ENCODE measurements at regions of chr3 and their contacts with region 1.

Region 1: GRCh38 chr3:122458992-122459391 is 43.1 kb upstream of the WDR5B start:
- DNase-seq: no peak
- H3K4me3 Mint-ChIP-seq: no peak overlapping the region
- H3K27ac Mint-ChIP-seq: no peak overlapping the region
- H3K4me1 Mint-ChIP-seq: no peaks in the 10 kb centered on the region
- H3K27me3 Mint-ChIP-seq: no peaks in the 10 kb centered on the region

Region 2: DNA sequence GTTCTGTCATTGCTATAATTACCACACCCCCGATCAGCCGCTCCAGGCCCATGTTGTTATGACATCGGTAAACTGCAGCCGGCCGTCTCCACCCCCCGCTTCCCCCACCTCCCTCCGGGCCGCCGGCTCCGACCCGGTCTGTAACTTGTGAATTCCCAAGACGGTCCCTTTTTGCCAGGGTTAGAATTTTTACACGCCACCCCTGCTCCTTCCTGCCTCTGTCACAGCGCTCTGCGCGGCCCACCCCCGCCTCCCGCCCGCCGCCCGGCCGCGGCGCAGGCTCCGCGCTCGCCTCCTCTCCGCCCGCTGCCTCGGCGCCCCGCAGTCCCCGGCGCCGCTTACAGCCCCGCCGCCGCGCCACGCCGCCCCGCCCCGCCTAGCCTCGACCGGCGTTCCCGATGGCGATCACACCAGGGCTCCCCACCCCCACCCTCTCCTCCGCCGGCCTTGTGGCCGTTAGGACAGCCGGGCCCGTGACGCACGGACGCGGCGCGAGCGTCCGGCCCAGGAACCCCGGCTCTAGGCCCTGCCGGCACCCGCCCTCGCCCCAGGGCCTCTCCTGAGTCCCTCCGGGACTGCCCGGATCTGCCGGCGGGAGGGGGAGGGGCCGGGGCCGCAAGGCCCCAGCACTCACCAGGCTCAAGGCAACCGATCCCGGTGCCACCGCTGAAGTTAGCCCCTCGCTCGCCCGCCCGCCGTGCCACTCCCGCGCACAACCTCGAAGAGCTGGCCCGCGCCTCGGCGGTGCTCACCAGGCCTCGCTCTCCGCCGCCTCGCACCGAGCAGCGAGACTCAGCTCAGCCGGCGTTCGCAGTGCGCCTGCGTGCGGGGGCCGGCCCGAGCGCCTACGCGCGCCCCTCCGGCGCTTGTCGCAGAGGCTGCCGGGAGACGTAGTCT is 55.4 kb after region 1 on chr3 and contains the start of gene KPNA1:
- intact Hi-C with region 1: loop called (anchors 2 kb)
- DNase-seq: peak; percentile 85
- H3K4me3 Mint-ChIP-seq: peak within 1 kb of the TSS; percentile 90
- H3K27ac Mint-ChIP-seq: peak within 1 kb of the TSS; percentile 92
- H3K4me1 Mint-ChIP-seq: peaks cover 46% of the 10 kb centered on the region
- H3K27me3 Mint-ChIP-seq: peaks cover 4% of the 10 kb centered on the region
- total RNA-seq, gene KPNA1: 81.7 and 88.2 TPM in 2 replicates

Measured in activated T-helper 1 cell treated with anti-CD3 and anti-CD28 coated beads, Interleukin-12 subunit alpha, Interleukin-12 subunit beta, Interleukin-2, Interleukin-4 antibody, amounts not matched to agents 30 ng/mL and 10 ng/mL and 1 ng/mL, durations not matched to agents 14 hours and 24 hours and 36 hours (primary cell).